Adrenal gland (tissue), 19 donors: ENCODE measurements at regions of chr6 and their contacts with region 1.

Region 1: GRCh38 chr6:89970609-89971337 is 76.5 kb downstream of the GJA10 start:
- DNase-seq: peak; percentile 35 to 73 (median 47)
- H3K4me3 ChIP-seq: no peak overlapping the region
- H3K27ac ChIP-seq: no peak overlapping the region
- H3K4me1 ChIP-seq: no peaks in the 10 kb centered on the region
- H3K27me3 ChIP-seq: no peaks in the 10 kb centered on the region
- CTCF ChIP-seq: peak; percentile 28 to 80 (median 67)
- POLR2A ChIP-seq: no peak

Region 2: DNA sequence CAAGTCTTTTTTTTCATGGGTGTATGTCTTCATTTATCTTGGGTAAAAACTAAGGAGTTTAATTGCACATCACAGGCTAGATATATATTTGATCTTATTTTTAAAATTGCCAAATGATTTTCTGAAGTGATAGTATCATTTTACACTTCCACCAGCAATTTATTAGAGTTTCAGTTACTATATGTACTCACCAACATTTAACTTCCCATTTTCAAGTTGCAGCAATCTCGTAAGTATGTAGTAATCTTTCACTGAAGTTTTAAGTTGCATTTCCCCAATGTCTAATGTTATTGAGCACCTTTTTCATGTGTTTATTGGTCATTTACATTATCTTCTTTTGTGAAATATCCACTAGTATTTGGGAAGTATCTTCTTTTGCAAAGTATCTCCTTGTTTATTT is 1527.2 kb before region 1 on chr6:
- intact Hi-C with region 1: no loop called
- DNase-seq: no peak
- H3K4me3 ChIP-seq: no peak overlapping the region
- H3K27ac ChIP-seq: no peak overlapping the region
- H3K4me1 ChIP-seq: no peaks in the 10 kb centered on the region
- H3K27me3 ChIP-seq: no peaks in the 10 kb centered on the region
- CTCF ChIP-seq: no peak
- POLR2A ChIP-seq: no peak

Region 3: GRCh38 chr6:89909991-89910390 is 60.8 kb before region 1 on chr6:
- intact Hi-C with region 1: no loop called
- DNase-seq: no peak
- H3K4me3 ChIP-seq: no peak overlapping the region
- H3K27ac ChIP-seq: no peak overlapping the region
- H3K4me1 ChIP-seq: no peaks in the 10 kb centered on the region
- H3K27me3 ChIP-seq: peaks cover 3% of the 10 kb centered on the region
- CTCF ChIP-seq: no peak
- POLR2A ChIP-seq: no peak

Region 4: DNA sequence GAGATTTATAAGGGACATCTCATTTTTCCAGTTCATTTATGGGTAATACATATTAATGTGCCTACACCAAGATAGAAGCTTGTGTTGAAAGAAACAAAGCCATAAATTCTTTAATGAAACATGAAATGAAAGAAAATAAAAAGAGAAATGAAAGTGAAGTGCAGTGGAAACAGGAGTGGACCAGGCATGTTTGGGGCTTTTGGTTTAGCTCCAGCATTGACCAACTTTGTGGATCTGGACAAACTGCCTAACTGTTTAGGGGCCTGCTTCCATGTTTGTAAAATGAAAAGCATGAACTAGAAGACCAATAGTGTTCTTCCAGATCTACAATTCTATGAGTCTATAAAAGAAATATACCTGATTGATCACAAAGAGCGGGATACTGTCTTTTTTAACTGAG is 48.4 kb after region 1 on chr6:
- intact Hi-C with region 1: no loop called
- DNase-seq: no peak
- H3K4me3 ChIP-seq: no peak overlapping the region
- H3K27ac ChIP-seq: no peak overlapping the region
- H3K4me1 ChIP-seq: no peaks in the 10 kb centered on the region
- H3K27me3 ChIP-seq: no peaks in the 10 kb centered on the region
- CTCF ChIP-seq: no peak
- POLR2A ChIP-seq: no peak

Region 5: GRCh38 chr6:90393232-90393884 is 422.6 kb after region 1 on chr6:
- intact Hi-C with region 1: loop called (anchors 2 to 10 kb)
- DNase-seq: peak; percentile 27 to 80 (median 57)
- H3K4me3 ChIP-seq: no peak overlapping the region
- H3K27ac ChIP-seq: no peak overlapping the region
- H3K4me1 ChIP-seq: no peaks in the 10 kb centered on the region
- H3K27me3 ChIP-seq: no peaks in the 10 kb centered on the region
- CTCF ChIP-seq: peak; percentile 61 to 80 (median 76)
- POLR2A ChIP-seq: no peak